ENCODE measurements at regions of chr1 and their contacts with region 1.

Region 1: GRCh38 chr1:145906954-145907753 is 2.7 kb downstream of the ITGA10 start:
- DNase-seq: peak; percentile 59
- H3K4me3 ChIP-seq: no peak overlapping the region
- H3K27ac ChIP-seq: peak overlapping the region; percentile 39
- H3K4me1 ChIP-seq: peaks cover 25% of the 10 kb centered on the region
- H3K27me3 ChIP-seq: no peaks in the 10 kb centered on the region
- CTCF ChIP-seq: no peak
- POLR2A ChIP-seq: no peak

Region 2: DNA sequence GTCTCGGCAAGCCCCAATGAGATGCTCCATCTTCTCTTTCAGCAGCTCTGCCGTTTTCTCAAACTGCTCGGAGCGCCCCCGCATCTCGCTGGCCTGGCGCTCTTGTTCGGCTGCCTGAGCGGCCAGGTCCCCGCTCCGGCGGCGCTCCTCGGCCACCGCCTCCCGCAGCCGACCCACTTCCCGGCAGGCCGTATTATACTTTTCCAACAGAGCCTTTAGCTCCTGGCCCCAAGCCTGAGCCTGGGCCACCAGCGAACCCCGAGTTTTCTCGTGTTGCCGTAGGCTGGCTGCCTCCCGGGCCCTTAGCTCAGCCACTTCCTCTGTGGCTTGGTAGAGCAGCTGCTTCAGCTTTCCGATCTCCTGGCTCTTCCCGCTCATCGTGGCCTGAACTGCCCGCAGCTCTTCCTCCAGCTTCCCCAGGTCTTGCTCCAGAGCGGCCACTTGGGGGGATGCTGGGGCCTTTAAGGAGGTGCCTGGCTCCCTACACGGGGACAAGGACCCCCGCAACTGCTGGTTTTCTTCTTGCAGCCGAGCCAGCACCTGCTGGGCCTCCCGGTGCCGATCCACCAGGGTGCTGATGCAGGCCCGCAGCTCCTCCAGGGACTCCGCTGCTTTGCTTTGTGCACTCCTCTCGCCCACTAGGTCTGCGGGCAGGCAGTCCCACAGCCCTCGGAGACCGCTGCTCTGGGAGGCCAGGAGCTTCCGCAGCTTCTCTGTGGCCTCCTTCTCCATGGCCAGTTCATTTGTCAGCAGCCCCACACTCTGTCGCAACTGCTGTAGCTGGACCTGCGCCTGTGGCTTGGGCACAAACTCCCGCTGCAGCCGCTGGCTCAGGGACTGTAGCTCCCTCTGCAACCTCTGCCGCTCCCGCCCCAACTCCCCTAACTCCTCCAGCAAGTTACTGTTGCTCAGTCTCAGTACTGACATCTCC is 34.9 kb before region 1 on chr1:
- CTCF ChIA-PET with region 1: interaction called, 12 read pairs
- POLR2A ChIA-PET with region 1: no interaction called
- dilution Hi-C with region 1: no loop called
- intact Hi-C with region 1: no loop called
- DNase-seq: peak; percentile 37
- H3K4me3 ChIP-seq: peak overlapping the region in 1 of 3 experiments; percentile 35
- H3K27ac ChIP-seq: no peak overlapping the region
- H3K4me1 ChIP-seq: peaks cover 8% of the 10 kb centered on the region
- H3K27me3 ChIP-seq: peaks cover 0 to 3% of the 10 kb centered on the region in 2 experiments
- CTCF ChIP-seq: no peak
- POLR2A ChIP-seq: no peak

Region 3: DNA sequence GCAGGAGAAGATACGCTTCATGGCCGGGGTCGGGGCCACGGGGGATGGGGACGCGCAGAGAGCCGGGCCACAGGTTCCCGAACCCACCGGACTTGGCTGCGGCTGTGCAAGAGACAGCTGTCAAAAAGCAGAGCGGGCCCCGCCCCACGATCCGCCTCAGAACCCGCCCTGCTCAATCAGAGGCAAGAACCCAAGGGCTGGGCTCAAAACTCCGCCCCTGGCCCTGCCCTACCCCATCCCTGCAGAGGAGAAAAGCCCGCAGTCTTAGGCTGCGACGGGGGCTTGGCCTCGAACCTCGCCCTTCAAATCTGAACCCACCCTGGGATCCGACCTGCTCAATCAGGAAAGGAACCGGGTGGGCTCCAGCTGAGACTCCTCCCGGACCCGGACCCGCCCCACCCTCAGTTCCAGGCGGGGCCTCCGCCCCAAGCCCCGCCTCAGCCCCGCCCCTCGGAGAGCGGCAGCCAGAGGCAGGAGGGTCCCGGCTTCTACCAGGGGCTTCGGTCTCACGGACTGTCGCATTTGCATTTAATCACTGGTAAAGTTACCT is 21.3 kb before region 1 on chr1 and contains the start of gene ANKRD35:
- CTCF ChIA-PET with region 1: interaction called, 280 read pairs
- POLR2A ChIA-PET with region 1: interaction called, 23 read pairs
- dilution Hi-C with region 1: no loop called
- intact Hi-C with region 1: loop called (anchors 1 kb)
- DNase-seq: peak; percentile 80
- H3K4me3 ChIP-seq: peak within 1 kb of the TSS; percentile 64 to 94 (median 68)
- H3K27ac ChIP-seq: no peak within 1 kb of the TSS
- H3K4me1 ChIP-seq: peaks cover 23% of the 10 kb centered on the region
- H3K27me3 ChIP-seq: no peaks in the 10 kb centered on the region
- CTCF ChIP-seq: no peak
- POLR2A ChIP-seq: no peak
- total RNA-seq, gene ANKRD35: 0.14 and 0.20 TPM in 2 replicates

Region 4: DNA sequence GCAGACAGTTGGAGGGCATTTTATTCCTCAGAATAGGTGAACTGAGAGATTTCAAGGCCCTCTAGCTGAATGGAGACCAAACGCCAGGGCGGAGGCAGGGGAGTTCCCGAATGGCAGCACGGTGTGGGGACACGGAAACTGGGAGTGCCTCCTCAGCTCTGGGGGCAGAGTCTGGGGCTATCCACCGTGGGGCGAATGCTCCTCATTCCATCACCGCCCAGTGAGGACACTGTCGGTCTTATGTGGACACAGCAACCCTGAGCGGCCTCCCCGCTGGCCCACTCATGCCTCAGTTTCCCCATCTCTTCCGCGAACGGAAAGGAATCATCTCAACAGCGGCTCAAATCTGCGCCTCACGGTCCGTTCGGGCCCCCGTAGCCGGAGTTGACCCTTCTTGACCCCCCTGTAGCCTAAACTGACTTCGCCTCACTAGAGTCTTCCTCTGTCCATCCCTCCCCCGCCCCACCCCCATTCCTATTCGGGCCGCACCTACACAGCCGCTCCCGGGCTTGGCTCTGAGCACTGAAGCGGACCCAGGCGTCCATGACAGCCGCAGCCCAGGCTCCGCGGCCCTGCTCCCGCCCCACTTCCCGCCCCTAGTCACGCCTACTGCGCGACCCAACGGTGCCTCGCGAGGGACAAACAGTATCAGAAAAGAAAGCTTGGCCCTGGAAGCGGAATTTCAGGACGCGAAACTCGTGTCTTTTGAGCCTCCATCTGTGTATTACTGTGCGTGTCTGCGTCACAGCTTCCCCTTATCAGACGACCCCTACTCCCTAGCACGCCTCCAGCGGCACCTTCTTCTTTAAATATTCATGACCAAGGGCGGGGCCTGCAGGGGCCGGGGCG is 11.2 kb after region 1 on chr1 and contains the start of gene PEX11B:
- CTCF ChIA-PET with region 1: interaction called, 22 read pairs
- POLR2A ChIA-PET with region 1: no interaction called
- dilution Hi-C with region 1: no loop called
- intact Hi-C with region 1: no loop called
- DNase-seq: peak; percentile 96
- H3K4me3 ChIP-seq: peak within 1 kb of the TSS; percentile 45 to 77 (median 62)
- H3K27ac ChIP-seq: peak within 1 kb of the TSS; percentile 19
- H3K4me1 ChIP-seq: peaks cover 16% of the 10 kb centered on the region
- H3K27me3 ChIP-seq: no peaks in the 10 kb centered on the region
- CTCF ChIP-seq: no peak
- POLR2A ChIP-seq: peak; percentile 63
- total RNA-seq, gene PEX11B: 29.0 and 30.5 TPM in 2 replicates

Region 5: GRCh38 chr1:145957443-145958319 is 50.5 kb after region 1 on chr1 and contains the start of gene LIX1L:
- CTCF ChIA-PET with region 1: interaction called, 3 read pairs
- POLR2A ChIA-PET with region 1: no interaction called
- dilution Hi-C with region 1: no loop called
- intact Hi-C with region 1: loop called (anchors 5 kb)
- DNase-seq: peak; percentile 97
- H3K4me3 ChIP-seq: peak within 1 kb of the TSS; percentile 71 to 87 (median 74)
- H3K27ac ChIP-seq: peak within 1 kb of the TSS; percentile 96
- H3K4me1 ChIP-seq: peaks cover 50% of the 10 kb centered on the region
- H3K27me3 ChIP-seq: no peaks in the 10 kb centered on the region
- CTCF ChIP-seq: no peak
- POLR2A ChIP-seq: peak; percentile 98
- total RNA-seq, gene LIX1L: 54.9 and 55.6 TPM in 2 replicates

Measured in endothelial cell of umbilical vein (primary cell).